Panc1 (cell line): ENCODE measurements at regions of chr19 and their contacts with region 1.

Region 1: DNA sequence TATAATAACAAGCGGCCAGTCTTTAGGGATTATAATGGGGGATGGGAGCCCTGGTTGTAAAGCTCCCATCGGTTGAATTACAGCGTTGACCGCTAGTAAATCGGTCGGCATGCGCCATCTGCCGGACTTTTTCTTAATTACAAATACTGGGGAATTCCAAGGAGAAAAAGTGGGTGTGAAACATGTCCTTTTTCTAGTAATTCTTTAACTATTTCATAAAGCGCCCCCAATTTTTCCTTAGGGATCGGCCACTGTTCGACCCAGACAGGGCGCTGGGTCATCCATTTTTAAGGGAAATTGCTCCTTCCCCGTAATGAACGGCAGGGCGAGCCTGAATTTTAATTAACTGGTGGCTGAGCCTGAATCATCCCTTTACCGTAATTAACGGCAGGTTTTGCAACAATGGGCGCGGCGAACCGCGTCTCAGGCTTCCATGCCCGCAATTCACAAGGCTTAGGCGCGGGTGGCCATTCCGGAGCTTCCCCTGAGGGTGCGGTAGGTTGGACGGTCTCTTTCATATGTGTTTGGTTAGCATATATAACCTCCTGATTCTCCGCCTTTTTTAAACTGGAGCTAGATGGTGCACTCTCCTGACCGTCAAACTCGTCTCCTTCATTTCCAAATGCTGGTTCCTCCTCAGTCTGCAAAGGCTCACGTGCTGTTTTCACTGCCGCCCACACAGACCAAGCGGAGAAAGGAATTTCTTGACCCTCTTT is 30.2 kb upstream of the EVI5L start:
- DNase-seq: no peak
- ATAC-seq: peak; percentile 84
- H3K4me3 ChIP-seq: peak overlapping the region; percentile 30 to 44
- H3K27ac ChIP-seq: 0 out of 2 replicates have a peak overlapping the region, but pooled peaks have one; percentile 23
- H3K4me1 ChIP-seq: peaks cover 3% of the 10 kb centered on the region; the same call in 1 of the 2 replicates
- H3K27me3 ChIP-seq: no peaks in the 10 kb centered on the region; the same call in 1 of the 2 replicates
- CTCF ChIP-seq: peak; percentile 74

Region 2: GRCh38 chr19:7098701-7099596 is 700.8 kb before region 1 on chr19:
- CTCF ChIA-PET with region 1: no interaction called
- POLR2A ChIA-PET with region 1: interaction called, 11 read pairs
- in situ Hi-C with region 1: no loop called
- intact Hi-C with region 1: no loop called
- DNase-seq: peak; percentile 53
- ATAC-seq: peak; percentile 95
- H3K4me3 ChIP-seq: peak overlapping the region; percentile 66 to 71
- H3K27ac ChIP-seq: peak overlapping the region; percentile 89
- H3K4me1 ChIP-seq: no peaks in the 10 kb centered on the region; the same call in 1 of the 2 replicates
- H3K27me3 ChIP-seq: no peaks in the 10 kb centered on the region
- CTCF ChIP-seq: no peak

Region 3: DNA sequence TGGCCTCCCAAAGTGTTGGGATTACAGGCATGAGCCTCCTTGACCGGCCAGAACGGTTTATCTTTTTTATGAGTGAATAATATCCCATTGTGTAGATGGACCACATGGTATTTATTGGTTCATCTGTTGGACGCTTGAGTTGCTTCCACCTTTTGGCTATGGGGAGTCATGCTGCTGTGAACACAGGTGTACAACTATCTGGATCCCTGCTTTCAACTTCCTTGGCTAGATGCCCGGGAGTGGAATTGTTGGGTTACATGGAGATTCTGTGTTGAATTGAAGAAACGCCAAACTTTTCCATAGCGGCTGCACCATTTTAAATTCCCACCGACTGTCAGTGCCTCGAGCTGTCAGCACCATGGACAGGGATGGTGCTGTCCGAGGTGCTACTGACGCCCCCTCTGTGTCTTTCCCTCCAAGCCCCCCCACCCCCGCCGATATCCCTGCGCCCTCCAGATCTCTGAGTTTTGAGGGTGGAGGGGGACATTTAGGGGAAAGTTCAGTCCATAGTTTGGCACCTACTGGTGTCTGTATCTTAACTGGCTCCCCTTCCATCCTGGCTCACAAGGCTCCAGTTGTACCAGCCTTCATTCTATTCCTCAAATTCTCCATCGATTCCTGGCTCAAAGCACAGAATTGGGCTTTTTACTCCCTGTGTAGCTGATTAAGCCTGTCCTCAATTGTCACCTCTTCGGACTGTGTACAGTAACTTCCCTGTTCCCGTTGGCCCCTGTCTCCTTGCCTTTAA is 237.0 kb before region 1 on chr19:
- CTCF ChIA-PET with region 1: interaction called, 21 read pairs
- POLR2A ChIA-PET with region 1: no interaction called
- in situ Hi-C with region 1: no loop called
- intact Hi-C with region 1: loop called (anchors 10 kb)
- DNase-seq: no peak
- ATAC-seq: no peak
- H3K4me3 ChIP-seq: no peak overlapping the region
- H3K27ac ChIP-seq: no peak overlapping the region
- H3K4me1 ChIP-seq: no peaks in the 10 kb centered on the region
- H3K27me3 ChIP-seq: no peaks in the 10 kb centered on the region
- CTCF ChIP-seq: no peak

Region 4: DNA sequence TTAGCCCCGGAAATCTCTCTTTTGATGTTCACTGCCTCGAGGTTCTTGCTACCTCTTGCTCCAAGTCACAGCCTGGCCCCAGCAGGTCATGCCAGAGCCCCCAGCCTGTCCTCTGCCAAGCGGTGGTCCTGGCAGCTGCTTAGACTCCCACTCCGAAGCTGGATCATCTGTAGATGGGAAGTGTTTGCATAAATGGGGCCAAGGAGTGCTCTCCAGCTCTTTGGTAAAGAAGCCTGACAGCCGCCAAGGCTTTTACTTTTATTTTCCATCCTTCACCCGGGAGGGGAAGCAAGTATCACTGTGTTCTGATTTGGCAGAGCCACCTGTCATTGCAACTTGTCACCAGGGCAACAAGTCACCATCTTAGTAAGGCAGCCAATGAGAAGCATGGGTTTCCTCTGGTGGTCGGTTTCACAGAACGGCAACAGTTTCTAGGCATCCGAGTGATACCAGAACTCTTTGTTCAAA is 141.5 kb before region 1 on chr19:
- CTCF ChIA-PET with region 1: interaction called, 11 read pairs
- POLR2A ChIA-PET with region 1: no interaction called
- in situ Hi-C with region 1: no loop called
- intact Hi-C with region 1: no loop called
- DNase-seq: no peak
- ATAC-seq: no peak
- H3K4me3 ChIP-seq: no peak overlapping the region
- H3K27ac ChIP-seq: no peak overlapping the region
- H3K4me1 ChIP-seq: no peaks in the 10 kb centered on the region
- H3K27me3 ChIP-seq: no peaks in the 10 kb centered on the region
- CTCF ChIP-seq: no peak

Region 5: GRCh38 chr19:7680606-7681339 is 119.0 kb before region 1 on chr19 and contains the start of gene TRAPPC5:
- CTCF ChIA-PET with region 1: interaction called, 10 read pairs
- POLR2A ChIA-PET with region 1: no interaction called
- in situ Hi-C with region 1: no loop called
- intact Hi-C with region 1: no loop called
- DNase-seq: no peak
- ATAC-seq: peak; percentile 85
- H3K4me3 ChIP-seq: peak within 1 kb of the TSS; percentile 67 to 85
- H3K27ac ChIP-seq: peak within 1 kb of the TSS; percentile 69
- H3K4me1 ChIP-seq: no peaks in the 10 kb centered on the region; the same call in 1 of the 2 replicates
- H3K27me3 ChIP-seq: no peaks in the 10 kb centered on the region
- CTCF ChIP-seq: peak; percentile 97
- total RNA-seq, gene TRAPPC5: 101 TPM

Region 6: GRCh38 chr19:7743425-7743841 is 56.4 kb before region 1 on chr19:
- CTCF ChIA-PET with region 1: no interaction called
- POLR2A ChIA-PET with region 1: no interaction called
- in situ Hi-C with region 1: no loop called
- intact Hi-C with region 1: no loop called
- DNase-seq: no peak
- ATAC-seq: no peak
- H3K4me3 ChIP-seq: no peak overlapping the region
- H3K27ac ChIP-seq: no peak overlapping the region
- H3K4me1 ChIP-seq: no peaks in the 10 kb centered on the region
- H3K27me3 ChIP-seq: no peaks in the 10 kb centered on the region
- CTCF ChIP-seq: no peak